HepG2 (cell line): ENCODE measurements at regions of chr19 and their contacts with region 1.

Region 1: DNA sequence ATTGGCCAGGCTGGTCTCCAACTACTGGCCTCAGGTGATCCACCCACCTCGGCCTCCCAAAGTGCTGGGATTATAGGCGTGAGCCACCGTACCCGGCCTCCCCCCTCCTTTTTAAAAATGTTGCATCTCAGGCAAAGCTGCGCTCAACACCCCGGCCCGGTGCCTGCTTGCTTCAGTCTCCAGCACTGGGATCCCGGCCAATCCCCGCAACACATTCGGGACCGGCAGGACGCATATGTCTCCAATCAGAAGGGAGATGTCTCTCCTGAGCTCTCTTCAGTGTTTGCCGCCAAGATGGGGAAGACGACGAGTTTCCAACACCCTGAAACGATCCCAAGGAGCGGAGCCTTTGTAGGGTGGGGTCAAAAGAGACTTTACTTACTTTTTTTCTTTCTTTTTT is 16.1 kb downstream of the GNG7 start:
- DNase-seq: no peak
- ATAC-seq: no peak; the same call in 2 of the 3 replicates
- H3K4me3 ChIP-seq: peak overlapping the region in 1 of 3 experiments; percentile 61; a peak in 3 of 6 replicates
- H3K27ac ChIP-seq: peak overlapping the region; percentile 85
- H3K4me1 ChIP-seq: peaks cover 33% of the 10 kb centered on the region
- H3K27me3 ChIP-seq: no peaks in the 10 kb centered on the region
- CTCF ChIP-seq: no peak
- EP300 ChIP-seq: no peak
- POLR2A ChIP-seq: no peak
- RAD21 ChIP-seq: no peak

Region 2: DNA sequence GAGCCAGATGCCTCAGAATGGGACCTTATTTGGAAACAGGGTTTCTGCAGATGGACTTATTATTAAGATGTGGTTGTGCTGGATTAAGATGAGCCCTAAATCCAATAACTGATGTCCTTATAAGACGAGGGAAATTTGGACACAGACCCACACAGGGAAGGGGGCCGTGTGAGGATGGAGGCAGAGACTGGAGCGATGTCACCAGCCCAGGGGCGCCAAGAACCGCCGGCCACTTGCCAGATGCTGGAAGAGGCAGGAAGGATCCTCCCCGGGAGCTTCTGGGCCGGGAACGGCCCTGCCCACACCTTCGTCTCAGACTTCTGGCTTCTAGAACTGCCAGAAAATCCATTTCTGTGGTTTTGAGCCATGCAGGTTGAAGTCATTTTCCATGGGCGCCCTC is 10.5 kb before region 1 on chr19:
- CTCF ChIA-PET with region 1: no interaction called
- POLR2A ChIA-PET with region 1: interaction called, 14 read pairs
- in situ Hi-C with region 1: no loop called
- intact Hi-C with region 1: no loop called
- DNase-seq: no peak
- ATAC-seq: no peak
- H3K4me3 ChIP-seq: no peak overlapping the region
- H3K27ac ChIP-seq: no peak overlapping the region
- H3K4me1 ChIP-seq: peaks cover 43% of the 10 kb centered on the region
- H3K27me3 ChIP-seq: no peaks in the 10 kb centered on the region
- CTCF ChIP-seq: no peak
- EP300 ChIP-seq: no peak
- POLR2A ChIP-seq: no peak
- RAD21 ChIP-seq: no peak